ENCODE measurements at regions of chr11 and their contacts with region 1.

Region 1: DNA sequence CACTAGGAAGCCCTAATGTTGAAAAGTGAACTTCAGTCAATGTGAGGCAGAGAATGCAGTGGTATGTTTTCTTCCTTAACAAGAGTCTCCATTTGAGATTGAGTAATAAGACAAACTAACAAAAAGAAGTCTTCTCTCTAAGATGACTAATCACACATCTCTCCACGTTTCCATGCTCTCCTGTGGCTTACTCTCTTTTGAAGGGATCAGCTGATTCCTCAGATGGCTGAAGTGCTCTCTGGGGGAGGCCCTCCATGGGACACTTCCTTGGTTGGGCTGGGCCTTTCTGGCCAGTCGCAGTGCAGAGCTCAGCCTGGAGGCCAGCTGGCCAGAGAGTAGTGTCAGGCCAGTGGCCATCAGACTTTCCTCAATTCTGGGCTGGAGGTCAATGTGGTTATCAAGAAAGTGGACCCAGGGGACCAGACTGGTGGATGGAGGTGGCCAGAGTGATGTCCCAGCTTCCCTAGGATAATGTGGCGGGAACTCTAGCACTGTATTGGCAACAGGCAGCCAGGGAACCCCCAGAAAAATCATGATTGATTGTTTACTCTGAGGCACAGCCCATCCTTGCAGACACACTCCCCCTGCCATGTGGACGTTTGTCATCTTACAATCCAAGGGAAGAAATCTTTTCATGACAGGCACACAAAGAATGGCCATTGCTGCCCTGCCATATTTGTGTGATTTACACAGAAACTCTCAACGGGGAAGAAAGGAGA is 14.5 kb downstream of the CSRP3 start:
- DNase-seq: no peak
- H3K4me3 ChIP-seq: peak overlapping the region in 7 of 59 donors; percentile 12 to 61 (median 30)
- H3K27ac ChIP-seq: peak overlapping the region in 15 of 59 donors; percentile 0 to 85 (median 38)
- H3K27me3 ChIP-seq: no peaks in the 10 kb centered on the region
- CTCF ChIP-seq: no peak

Region 2: GRCh38 chr11:19240420-19241259 is 53.4 kb after region 1 on chr11 and contains the start of gene E2F8:
- intact Hi-C with region 1: loop called in 1 of 2 experiments (anchors 5 kb)
- DNase-seq: peak; percentile 76 to 95 (median 90)
- H3K4me3 ChIP-seq: peak within 1 kb of the TSS; percentile 45 to 83 (median 65)
- H3K27ac ChIP-seq: no peak within 1 kb of the TSS
- H3K27me3 ChIP-seq: peaks cover 2 to 64% (median 35%) of the 10 kb centered on the region in 45 donors
- CTCF ChIP-seq: peak in 3 of 56 donors; percentile 9 to 13 (median 10)
- total RNA-seq, gene E2F8: 0.14 to 0.71 (median 0.18) TPM in 5 of 120 experiments, not detected in the others

Region 3: GRCh38 chr11:19474954-19475715 is 287.9 kb after region 1 on chr11:
- intact Hi-C with region 1: loop called in 1 of 2 experiments (anchors 10 kb)
- DNase-seq: peak in 9 of 10 donors; percentile 39 to 81 (median 65)
- H3K4me3 ChIP-seq: peak overlapping the region in 29 of 59 donors; percentile 2 to 49 (median 20)
- H3K27ac ChIP-seq: peak overlapping the region in 58 of 59 donors; percentile 40 to 97 (median 89)
- H3K27me3 ChIP-seq: no peaks in the 10 kb centered on the region
- CTCF ChIP-seq: peak in 4 of 56 donors; percentile 4 to 29 (median 8)